ENCODE measurements at regions of chr5 and their contacts with region 1.

Region 1: GRCh38 chr5:131773805-131774204 is 23.0 kb downstream of the FNIP1 start:
- DNase-seq: no peak
- H3K4me3 ChIP-seq: no peak overlapping the region
- H3K27ac ChIP-seq: no peak overlapping the region
- H3K4me1 ChIP-seq: peaks cover 0 to 77% (median 39%) of the 10 kb centered on the region in 4 donors
- H3K27me3 ChIP-seq: no peaks in the 10 kb centered on the region
- CTCF ChIP-seq: no peak
- EP300 ChIP-seq: no peak
- POLR2A ChIP-seq: no peak

Region 2: GRCh38 chr5:131684595-131684994 is 89.2 kb before region 1 on chr5:
- intact Hi-C with region 1: no loop called
- DNase-seq: no peak
- H3K4me3 ChIP-seq: no peak overlapping the region
- H3K27ac ChIP-seq: no peak overlapping the region
- H3K4me1 ChIP-seq: peaks cover 0 to 13% (median 2%) of the 10 kb centered on the region in 4 donors
- H3K27me3 ChIP-seq: no peaks in the 10 kb centered on the region
- CTCF ChIP-seq: no peak
- EP300 ChIP-seq: no peak
- POLR2A ChIP-seq: no peak

Region 3: DNA sequence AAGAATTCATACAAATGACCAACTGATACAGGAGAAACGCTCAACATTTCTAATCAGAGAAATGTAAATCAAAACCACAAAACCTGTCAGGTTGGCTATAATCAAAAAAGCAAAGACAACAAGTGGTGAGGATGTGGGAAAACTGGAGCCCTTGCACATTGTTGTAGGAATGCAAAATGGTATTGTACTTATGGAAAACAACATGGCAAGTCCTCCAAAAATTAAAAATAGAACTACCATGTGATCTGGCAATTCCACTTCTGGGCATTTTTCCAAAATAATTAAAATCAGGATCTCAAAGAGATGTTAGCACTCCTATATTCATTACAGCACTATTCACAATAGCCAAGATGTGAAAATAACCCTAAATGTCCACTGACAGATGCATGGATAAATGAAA is 53.1 kb before region 1 on chr5:
- intact Hi-C with region 1: loop called (anchors 10 kb)
- DNase-seq: no peak
- H3K4me3 ChIP-seq: no peak overlapping the region
- H3K27ac ChIP-seq: no peak overlapping the region
- H3K4me1 ChIP-seq: peaks cover 0 to 6% (median 0%) of the 10 kb centered on the region in 4 donors
- H3K27me3 ChIP-seq: no peaks in the 10 kb centered on the region
- CTCF ChIP-seq: no peak
- EP300 ChIP-seq: no peak
- POLR2A ChIP-seq: no peak